HEK293T (cell line): ENCODE measurements at regions of chr12 and their contacts with region 1.

Region 1: GRCh38 chr12:55705782-55706402 is 1.8 kb downstream of the ITGA7 start:
- DNase-seq: peak; percentile 38

Region 2: GRCh38 chr12:55642669-55643068 is 63.2 kb before region 1 on chr12:
- CTCF ChIA-PET with region 1: no interaction called
- POLR2A ChIA-PET with region 1: no interaction called
- DNase-seq: no peak

Region 3: DNA sequence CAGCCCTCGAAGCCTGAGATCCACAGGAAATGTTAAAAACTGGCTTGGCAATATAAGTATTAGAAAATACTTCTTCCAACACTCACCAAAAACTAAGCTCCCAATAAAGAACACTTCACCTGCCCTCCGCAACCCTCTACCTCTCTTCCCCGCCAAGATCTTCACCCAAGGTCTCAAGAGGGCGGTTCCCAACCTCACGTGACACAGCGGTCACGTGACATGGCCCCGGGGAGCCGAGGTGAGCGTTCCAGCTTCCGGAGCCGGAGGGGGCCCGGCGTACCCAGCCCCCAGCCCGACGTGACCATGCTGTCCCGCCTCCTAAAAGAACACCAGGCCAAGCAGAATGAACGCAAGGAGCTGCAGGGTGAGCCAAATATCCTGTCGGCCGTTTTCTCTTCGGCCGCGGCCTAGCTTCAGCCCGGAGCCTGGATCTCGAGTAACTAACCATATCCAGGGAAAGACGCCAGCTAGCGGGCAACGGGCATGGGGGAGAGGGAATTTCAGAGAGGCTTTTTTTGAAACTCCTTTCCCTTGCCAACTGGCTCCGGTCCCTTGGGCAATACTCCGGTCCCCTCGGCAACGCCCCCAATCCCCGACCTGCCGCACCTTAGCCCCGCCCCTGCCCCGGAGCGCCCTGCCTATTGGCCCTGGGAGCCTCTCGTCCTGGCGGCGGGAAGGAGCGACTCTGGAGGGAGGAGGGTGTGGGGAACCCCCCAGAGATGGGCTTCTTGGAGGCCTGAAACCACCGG is 10.1 kb after region 1 on chr12 and contains the start of gene BLOC1S1:
- CTCF ChIA-PET with region 1: interaction called, 6 read pairs
- POLR2A ChIA-PET with region 1: interaction called, 18 read pairs
- DNase-seq: peak; percentile 92